ENCODE measurements at regions of chr6 and their contacts with region 1.

Region 1: GRCh38 chr6:138428944-138429598 is 25.0 kb downstream of the HEBP2 start:
- DNase-seq: peak in 7 of 9 donors; percentile 28 to 62 (median 43)
- ATAC-seq: peak; percentile 71
- H3K4me3 ChIP-seq: no peak overlapping the region
- H3K4me3 Mint-ChIP-seq: no peak overlapping the region
- H3K27ac ChIP-seq: no peak overlapping the region
- H3K27ac Mint-ChIP-seq: no peak overlapping the region
- H3K4me1 ChIP-seq: no peaks in the 10 kb centered on the region
- H3K4me1 Mint-ChIP-seq: peaks cover 0 to 6% (median 0%) of the 10 kb centered on the region in 7 donors
- H3K27me3 ChIP-seq: no peaks in the 10 kb centered on the region
- H3K27me3 Mint-ChIP-seq: peaks cover 0 to 7% (median 5%) of the 10 kb centered on the region in 5 donors

Region 2: GRCh38 chr6:138357928-138358327 is 71.1 kb before region 1 on chr6:
- CTCF ChIA-PET with region 1: no interaction called
- POLR2A ChIA-PET with region 1: no interaction called
- intact Hi-C with region 1: no loop called
- DNase-seq: no peak
- ATAC-seq: no peak
- H3K4me3 ChIP-seq: no peak overlapping the region
- H3K4me3 Mint-ChIP-seq: no peak overlapping the region
- H3K27ac ChIP-seq: no peak overlapping the region
- H3K27ac Mint-ChIP-seq: no peak overlapping the region
- H3K4me1 ChIP-seq: no peaks in the 10 kb centered on the region
- H3K4me1 Mint-ChIP-seq: no peaks in the 10 kb centered on the region
- H3K27me3 ChIP-seq: no peaks in the 10 kb centered on the region
- H3K27me3 Mint-ChIP-seq: peaks cover 10 to 31% (median 17%) of the 10 kb centered on the region in 5 donors

Region 3: GRCh38 chr6:138440758-138441357 is 11.8 kb after region 1 on chr6:
- CTCF ChIA-PET with region 1: interaction called, 13 read pairs
- POLR2A ChIA-PET with region 1: no interaction called
- intact Hi-C with region 1: no loop called
- DNase-seq: no peak
- ATAC-seq: peak; percentile 24
- H3K4me3 ChIP-seq: no peak overlapping the region
- H3K4me3 Mint-ChIP-seq: no peak overlapping the region
- H3K27ac ChIP-seq: no peak overlapping the region
- H3K27ac Mint-ChIP-seq: no peak overlapping the region
- H3K4me1 ChIP-seq: no peaks in the 10 kb centered on the region
- H3K4me1 Mint-ChIP-seq: peaks cover 0 to 2% (median 0%) of the 10 kb centered on the region in 7 donors
- H3K27me3 ChIP-seq: no peaks in the 10 kb centered on the region
- H3K27me3 Mint-ChIP-seq: peaks cover 0 to 8% (median 0%) of the 10 kb centered on the region in 5 donors

Region 4: DNA sequence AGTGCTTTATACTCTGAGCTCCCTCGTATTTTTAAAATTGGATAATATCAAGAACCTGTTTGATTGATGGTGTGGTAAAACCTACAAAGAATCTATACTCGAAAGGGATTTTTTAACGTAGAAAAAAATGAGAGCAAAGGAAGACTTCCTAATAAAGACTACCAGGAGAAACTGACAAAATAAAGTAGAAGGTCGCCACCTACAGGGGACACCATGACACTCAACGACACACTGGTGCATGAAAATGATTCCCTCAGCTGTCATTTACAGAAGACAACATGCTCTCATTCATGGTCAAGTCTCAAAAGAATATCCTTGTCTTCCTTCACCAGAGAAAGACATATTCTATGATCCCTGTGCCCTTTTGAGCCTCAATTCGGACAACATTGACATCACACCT is 80.3 kb after region 1 on chr6:
- CTCF ChIA-PET with region 1: interaction called, 120 read pairs
- POLR2A ChIA-PET with region 1: interaction called, 4 read pairs
- intact Hi-C with region 1: loop called (anchors 1 kb)
- DNase-seq: peak in 8 of 9 donors; percentile 5 to 52 (median 31)
- ATAC-seq: peak; percentile 52
- H3K4me3 ChIP-seq: no peak overlapping the region
- H3K4me3 Mint-ChIP-seq: no peak overlapping the region
- H3K27ac ChIP-seq: no peak overlapping the region
- H3K27ac Mint-ChIP-seq: peak overlapping the region in 1 of 9 donors; percentile 6
- H3K4me1 ChIP-seq: peaks cover 0 to under 1% of the 10 kb centered on the region in 2 donors
- H3K4me1 Mint-ChIP-seq: peaks cover 0 to 5% (median 0%) of the 10 kb centered on the region in 7 donors
- H3K27me3 ChIP-seq: no peaks in the 10 kb centered on the region
- H3K27me3 Mint-ChIP-seq: peaks cover 0 to 23% (median 4%) of the 10 kb centered on the region in 5 donors

Region 5: DNA sequence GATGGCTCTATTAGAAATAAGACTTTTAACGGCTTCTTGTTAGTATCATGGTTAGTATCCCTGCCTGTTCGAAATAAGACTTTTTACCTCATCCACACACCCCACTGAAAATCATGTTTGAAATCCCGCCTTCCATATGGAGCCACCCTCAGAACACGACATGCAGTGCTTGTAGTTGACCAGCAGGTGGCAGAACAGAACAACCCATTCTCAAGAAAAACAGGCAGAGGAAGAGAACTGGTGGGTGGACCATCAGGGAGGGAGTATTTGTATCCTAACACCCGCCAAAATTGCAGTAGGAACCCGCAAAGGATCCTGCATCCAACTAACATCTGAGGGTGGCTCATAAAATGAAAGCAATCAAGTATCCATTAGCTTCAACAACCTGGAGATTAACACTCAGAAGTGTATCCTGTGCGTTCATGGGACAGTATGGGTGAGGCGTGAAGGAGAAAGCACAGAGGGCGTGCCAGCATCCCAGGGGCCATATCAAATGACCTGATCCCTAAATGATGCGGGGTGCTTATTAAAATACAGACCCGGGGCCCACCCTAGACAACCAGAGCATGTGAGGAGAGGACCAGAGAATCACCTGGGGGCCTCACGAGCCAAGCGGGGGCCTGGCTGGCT is 159.8 kb after region 1 on chr6:
- CTCF ChIA-PET with region 1: no interaction called
- POLR2A ChIA-PET with region 1: no interaction called
- intact Hi-C with region 1: loop called (anchors 1 to 2 kb)
- DNase-seq: peak in 8 of 9 donors; percentile 14 to 60 (median 46)
- ATAC-seq: peak; percentile 69
- H3K4me3 ChIP-seq: no peak overlapping the region
- H3K4me3 Mint-ChIP-seq: no peak overlapping the region
- H3K27ac ChIP-seq: no peak overlapping the region
- H3K27ac Mint-ChIP-seq: no peak overlapping the region
- H3K4me1 ChIP-seq: peaks cover 0 to 11% of the 10 kb centered on the region in 2 donors
- H3K4me1 Mint-ChIP-seq: peaks cover 12 to 29% (median 17%) of the 10 kb centered on the region in 7 donors
- H3K27me3 ChIP-seq: no peaks in the 10 kb centered on the region
- H3K27me3 Mint-ChIP-seq: peaks cover 0 to 3% (median 0%) of the 10 kb centered on the region in 5 donors

Measured in naive thymus-derived CD4-positive, alpha-beta T cell (primary cell).